ENCODE measurements at regions of chr19 and their contacts with region 1.

Region 1: DNA sequence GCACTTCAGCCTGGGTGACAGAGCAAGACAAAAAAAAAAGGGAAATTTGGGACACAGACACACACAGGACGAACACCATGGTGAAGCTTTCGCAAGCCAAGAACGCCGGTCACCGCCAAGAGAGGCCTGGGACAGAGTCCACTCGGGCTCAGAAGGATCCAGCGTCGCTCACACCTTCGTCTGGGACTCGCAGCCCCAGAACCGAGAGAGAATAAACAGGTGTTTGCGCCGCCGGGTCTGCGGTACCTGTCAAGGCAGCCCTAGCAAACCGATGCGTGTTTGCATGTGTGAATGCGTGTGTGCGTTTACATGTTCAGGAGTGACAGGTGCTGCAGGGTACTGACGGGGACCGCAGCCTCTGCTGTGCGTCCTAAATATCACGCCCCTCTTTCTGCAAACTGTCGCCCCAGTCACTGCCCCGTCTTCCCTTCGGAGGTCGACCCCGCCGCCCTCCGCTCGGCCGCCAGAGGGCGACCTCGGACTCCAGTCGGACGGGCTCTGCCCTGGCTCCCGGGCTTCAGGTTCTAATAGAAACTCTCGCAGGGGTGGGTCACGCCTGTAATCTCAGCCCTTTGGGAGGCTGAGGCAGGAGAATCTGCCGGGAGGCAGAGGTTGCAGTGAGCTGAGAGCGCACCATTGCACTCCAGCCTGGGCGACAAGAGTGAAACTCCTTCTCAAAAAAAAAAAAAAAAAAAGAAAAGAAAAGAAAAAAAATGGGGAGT is 11.8 kb upstream of the CSNK1G2 start:
- DNase-seq: no peak
- H3K4me3 ChIP-seq: peak overlapping the region; percentile 7 to 28
- H3K27ac ChIP-seq: peak overlapping the region; percentile 2
- H3K4me1 ChIP-seq: peaks cover 14% of the 10 kb centered on the region
- H3K27me3 ChIP-seq: no peaks in the 10 kb centered on the region
- CTCF ChIP-seq: peak in 2 of 3 experiments; percentile 70 to 82
- POLR2A ChIP-seq: no peak

Region 2: GRCh38 chr19:1826557-1827521 is 102.3 kb before region 1 on chr19:
- intact Hi-C with region 1: no loop called
- DNase-seq: no peak
- H3K4me3 ChIP-seq: peak overlapping the region in 1 of 2 donors; percentile 3
- H3K27ac ChIP-seq: no peak overlapping the region
- H3K4me1 ChIP-seq: peaks cover 9% of the 10 kb centered on the region
- H3K27me3 ChIP-seq: no peaks in the 10 kb centered on the region
- CTCF ChIP-seq: no peak
- POLR2A ChIP-seq: no peak

Region 3: GRCh38 chr19:1884719-1885334 is 44.4 kb before region 1 on chr19:
- intact Hi-C with region 1: no loop called
- DNase-seq: peak in 1 of 2 donors; percentile 96
- H3K4me3 ChIP-seq: peak overlapping the region; percentile 96 to 98
- H3K27ac ChIP-seq: peak overlapping the region; percentile 86
- H3K4me1 ChIP-seq: peaks cover 50% of the 10 kb centered on the region
- H3K27me3 ChIP-seq: no peaks in the 10 kb centered on the region
- CTCF ChIP-seq: no peak
- POLR2A ChIP-seq: no peak

Region 4: GRCh38 chr19:2070436-2070827 is 141.2 kb after region 1 on chr19:
- intact Hi-C with region 1: loop called (anchors 5 kb)
- DNase-seq: no peak
- H3K4me3 ChIP-seq: no peak overlapping the region
- H3K27ac ChIP-seq: peak overlapping the region; percentile 85
- H3K4me1 ChIP-seq: peaks cover 19% of the 10 kb centered on the region
- H3K27me3 ChIP-seq: no peaks in the 10 kb centered on the region
- CTCF ChIP-seq: no peak
- POLR2A ChIP-seq: no peak